ENCODE measurements at regions of chr3 and their contacts with region 1.

Region 1: DNA sequence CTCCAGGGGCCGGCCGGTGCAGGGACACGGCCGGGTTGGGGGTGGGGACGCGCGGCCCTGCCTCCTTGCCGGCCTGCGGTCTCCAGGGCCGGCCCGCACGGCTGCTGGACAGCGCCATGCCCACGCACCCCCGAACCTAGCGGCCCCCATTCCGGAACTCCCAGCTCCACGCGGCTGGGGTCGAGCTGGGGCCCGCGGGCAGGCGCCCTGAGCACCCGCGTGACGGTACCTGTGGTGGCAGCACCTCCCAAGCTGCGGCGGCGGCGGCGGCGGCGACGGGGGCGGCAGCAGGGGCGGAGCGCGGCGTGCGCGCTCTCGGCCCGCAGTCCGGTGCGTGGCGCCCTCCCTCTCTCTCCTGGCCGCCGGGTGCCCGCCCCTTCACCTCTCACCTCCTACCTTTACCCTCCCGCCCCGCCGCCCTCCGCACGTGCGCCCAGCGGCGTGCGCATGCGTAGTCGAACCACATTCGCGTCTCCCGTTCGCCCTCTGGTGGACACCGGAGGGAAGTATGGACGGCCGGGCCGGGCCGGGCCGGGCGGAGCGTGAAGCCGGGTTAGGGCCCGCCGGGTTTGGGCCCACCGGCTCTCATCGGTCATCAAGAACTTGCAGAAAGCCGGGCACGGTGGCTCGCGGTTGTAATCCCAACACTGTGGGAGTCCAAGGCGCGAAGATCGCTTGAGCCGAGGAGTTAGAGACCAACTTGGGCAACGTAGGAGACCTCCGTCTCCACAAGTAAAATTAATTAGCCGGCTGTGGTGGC is at the start of gene SCAP:
- DNase-seq: peak; percentile 96 to 97 (median 97)
- ATAC-seq: peak; percentile 95 to 99 (median 97)
- H3K4me3 ChIP-seq: peak within 1 kb of the TSS; percentile 88 to 99 (median 91)
- H3K27ac ChIP-seq: peak within 1 kb of the TSS; percentile 63 to 81 (median 70)
- H3K4me1 ChIP-seq: peaks cover 0 to 23% (median 8%) of the 10 kb centered on the region in 4 donors
- H3K27me3 ChIP-seq: no peaks in the 10 kb centered on the region
- CTCF ChIP-seq: peak; percentile 89 to 99 (median 93)
- POLR2A ChIP-seq: peak; percentile 67
- total RNA-seq, gene SCAP: 48.8 to 85.1 (median 78.9) TPM

Region 2: GRCh38 chr3:47096959-47097358 is 378.8 kb before region 1 on chr3:
- intact Hi-C with region 1: no loop called
- DNase-seq: no peak
- ATAC-seq: no peak
- H3K4me3 ChIP-seq: no peak overlapping the region
- H3K27ac ChIP-seq: no peak overlapping the region
- H3K4me1 ChIP-seq: no peaks in the 10 kb centered on the region
- H3K27me3 ChIP-seq: no peaks in the 10 kb centered on the region
- CTCF ChIP-seq: no peak
- POLR2A ChIP-seq: no peak

Region 3: GRCh38 chr3:47108546-47108945 is 367.2 kb before region 1 on chr3:
- intact Hi-C with region 1: no loop called
- DNase-seq: no peak
- ATAC-seq: no peak
- H3K4me3 ChIP-seq: no peak overlapping the region
- H3K27ac ChIP-seq: no peak overlapping the region
- H3K4me1 ChIP-seq: no peaks in the 10 kb centered on the region
- H3K27me3 ChIP-seq: no peaks in the 10 kb centered on the region
- CTCF ChIP-seq: no peak
- POLR2A ChIP-seq: no peak

Region 4: DNA sequence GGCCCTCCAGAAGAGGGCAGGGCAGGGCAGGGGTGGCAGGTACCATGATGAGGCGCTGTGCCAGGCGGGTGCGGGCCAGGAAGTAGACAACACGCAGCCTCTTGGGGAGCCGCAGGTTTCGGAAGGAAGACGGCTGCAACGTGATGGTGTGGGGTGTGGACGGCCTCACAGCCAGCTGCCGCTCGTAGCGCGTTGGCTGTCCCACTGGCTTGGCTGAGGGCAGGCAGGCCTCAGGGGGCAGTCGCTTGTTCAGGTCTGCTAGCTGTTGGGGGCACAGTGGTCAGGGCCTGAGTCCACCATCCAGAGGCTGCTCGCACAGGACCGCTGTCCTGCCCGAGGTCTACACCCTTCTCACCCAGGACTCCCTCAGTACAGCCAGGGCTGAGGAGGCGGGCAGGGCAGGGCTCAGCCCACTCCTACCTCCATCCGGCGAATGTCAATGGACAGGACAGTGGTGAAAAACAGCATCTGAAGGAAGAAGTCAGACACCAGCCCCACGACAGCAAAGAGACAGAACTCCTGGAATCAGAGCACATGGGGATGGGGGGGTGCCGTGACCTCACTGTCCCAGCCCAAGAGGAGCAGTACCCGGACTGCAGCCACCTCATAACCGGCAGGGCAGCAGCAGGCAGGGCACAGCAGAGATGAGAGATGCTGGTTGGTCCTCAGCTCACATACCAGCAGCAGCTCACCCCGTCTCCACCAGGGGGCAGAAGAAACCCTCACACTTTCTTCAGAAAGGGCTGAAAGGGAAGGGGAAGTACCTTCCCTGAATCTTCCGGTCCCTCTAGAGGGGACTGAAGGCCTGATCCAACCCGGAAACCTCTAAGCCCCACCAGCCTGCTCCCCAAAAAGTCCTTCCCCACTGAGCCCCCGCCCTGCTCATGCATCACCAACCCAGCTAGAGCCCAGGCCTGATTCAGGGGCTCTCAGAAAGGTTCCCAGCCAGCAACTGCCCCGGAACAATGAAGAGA is 55.0 kb before region 1 on chr3:
- intact Hi-C with region 1: loop called (anchors 5 kb)
- DNase-seq: peak; percentile 80 to 87 (median 84)
- ATAC-seq: peak; percentile 68 to 76 (median 70)
- H3K4me3 ChIP-seq: peak overlapping the region in 2 of 3 donors; percentile 9 to 26
- H3K27ac ChIP-seq: peak overlapping the region in 2 of 3 donors; percentile 49 to 72
- H3K4me1 ChIP-seq: peaks cover 0 to 52% (median 22%) of the 10 kb centered on the region in 4 donors
- H3K27me3 ChIP-seq: no peaks in the 10 kb centered on the region
- CTCF ChIP-seq: peak; percentile 87 to 94 (median 92)
- POLR2A ChIP-seq: no peak

Measured in right lobe of liver (tissue), 6 donors.